WTC11 (cell line): ENCODE measurements at regions of chr19 and their contacts with region 1.

Region 1: GRCh38 chr19:45152504-45153338 is 8.1 kb downstream of the NKPD1 start:
- DNase-seq: peak; percentile 75
- ATAC-seq: peak; percentile 23
- H3K4me3 Mint-ChIP-seq: peak overlapping the region; percentile 54
- H3K27ac Mint-ChIP-seq: no peak overlapping the region
- H3K4me1 Mint-ChIP-seq: peaks cover 15% of the 10 kb centered on the region
- H3K27me3 Mint-ChIP-seq: peaks cover 58% of the 10 kb centered on the region
- CTCF ChIP-seq: no peak

Region 2: GRCh38 chr19:45092747-45093678 is 59.7 kb before region 1 on chr19 and contains the start of gene PPP1R37:
- CTCF ChIA-PET with region 1: interaction called, 18 read pairs
- POLR2A ChIA-PET with region 1: interaction called, 3 read pairs
- DNase-seq: peak; percentile 93
- ATAC-seq: peak; percentile 52
- H3K4me3 Mint-ChIP-seq: peak within 1 kb of the TSS; percentile 84
- H3K27ac Mint-ChIP-seq: peak within 1 kb of the TSS; percentile 100
- H3K4me1 Mint-ChIP-seq: peaks cover 57% of the 10 kb centered on the region
- H3K27me3 Mint-ChIP-seq: no peaks in the 10 kb centered on the region
- CTCF ChIP-seq: no peak
- total RNA-seq, gene PPP1R37: 34.5 to 35.9 TPM (median 35.4 TPM) in 3 replicates

Region 3: DNA sequence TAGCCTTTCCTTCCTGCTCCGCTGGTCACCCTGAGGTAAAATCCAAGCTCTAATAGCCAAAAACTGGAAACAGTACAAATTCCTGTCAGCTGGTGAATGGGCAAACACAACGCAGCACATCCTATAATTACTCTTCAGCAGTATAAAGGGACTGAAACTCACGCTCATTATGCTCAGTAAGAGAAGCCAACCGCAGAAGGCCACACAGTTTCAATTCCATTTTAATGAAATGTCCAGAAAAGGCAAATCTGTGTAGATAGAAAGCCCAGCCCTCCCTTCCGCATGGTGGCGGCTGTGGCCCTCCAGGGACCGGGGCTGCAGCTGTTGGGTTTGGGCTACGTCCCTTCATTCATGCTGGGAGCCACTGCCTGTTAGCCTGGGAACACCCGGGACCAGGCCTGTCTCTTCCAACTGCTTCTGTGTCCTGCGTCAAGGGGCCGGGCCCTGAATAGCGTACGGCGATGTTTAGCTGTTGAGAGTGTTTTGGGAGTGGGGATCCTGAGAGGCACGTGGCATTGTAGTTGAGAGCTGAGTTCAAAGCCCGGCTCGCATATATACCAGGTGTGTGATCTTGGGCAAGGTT is 15.5 kb before region 1 on chr19:
- CTCF ChIA-PET with region 1: interaction called, 17 read pairs
- POLR2A ChIA-PET with region 1: no interaction called
- DNase-seq: no peak
- ATAC-seq: no peak
- H3K4me3 Mint-ChIP-seq: no peak overlapping the region
- H3K27ac Mint-ChIP-seq: peak overlapping the region; percentile 86
- H3K4me1 Mint-ChIP-seq: peaks cover 31% of the 10 kb centered on the region
- H3K27me3 Mint-ChIP-seq: no peaks in the 10 kb centered on the region
- CTCF ChIP-seq: no peak

Region 4: GRCh38 chr19:45164577-45165335 is 12.0 kb after region 1 on chr19:
- CTCF ChIA-PET with region 1: interaction called, 20 read pairs
- POLR2A ChIA-PET with region 1: no interaction called
- DNase-seq: peak; percentile 66
- ATAC-seq: peak; percentile 67
- H3K4me3 Mint-ChIP-seq: no peak overlapping the region
- H3K27ac Mint-ChIP-seq: no peak overlapping the region
- H3K4me1 Mint-ChIP-seq: peaks cover 12% of the 10 kb centered on the region
- H3K27me3 Mint-ChIP-seq: peaks cover 4% of the 10 kb centered on the region
- CTCF ChIP-seq: no peak

Region 5: GRCh38 chr19:45340232-45340898 is 187.6 kb after region 1 on chr19 and contains the start of gene KLC3:
- CTCF ChIA-PET with region 1: interaction called, 11 read pairs
- POLR2A ChIA-PET with region 1: no interaction called
- DNase-seq: peak; percentile 66
- ATAC-seq: peak; percentile 55
- H3K4me3 Mint-ChIP-seq: peak within 1 kb of the TSS; percentile 63
- H3K27ac Mint-ChIP-seq: no peak within 1 kb of the TSS
- H3K4me1 Mint-ChIP-seq: peaks cover 2% of the 10 kb centered on the region; the same call in 1 of the 2 replicates
- H3K27me3 Mint-ChIP-seq: peaks cover 15% of the 10 kb centered on the region
- CTCF ChIP-seq: no peak
- total RNA-seq, gene KLC3: 5.2 to 6.5 TPM (median 5.3 TPM) in 3 replicates